Activated CD4-positive, alpha-beta memory T cell treated with anti-CD3 and anti-CD28 coated beads for 36 hours (primary cell): ENCODE measurements at regions of chr3 and their contacts with region 1.

Region 1: DNA sequence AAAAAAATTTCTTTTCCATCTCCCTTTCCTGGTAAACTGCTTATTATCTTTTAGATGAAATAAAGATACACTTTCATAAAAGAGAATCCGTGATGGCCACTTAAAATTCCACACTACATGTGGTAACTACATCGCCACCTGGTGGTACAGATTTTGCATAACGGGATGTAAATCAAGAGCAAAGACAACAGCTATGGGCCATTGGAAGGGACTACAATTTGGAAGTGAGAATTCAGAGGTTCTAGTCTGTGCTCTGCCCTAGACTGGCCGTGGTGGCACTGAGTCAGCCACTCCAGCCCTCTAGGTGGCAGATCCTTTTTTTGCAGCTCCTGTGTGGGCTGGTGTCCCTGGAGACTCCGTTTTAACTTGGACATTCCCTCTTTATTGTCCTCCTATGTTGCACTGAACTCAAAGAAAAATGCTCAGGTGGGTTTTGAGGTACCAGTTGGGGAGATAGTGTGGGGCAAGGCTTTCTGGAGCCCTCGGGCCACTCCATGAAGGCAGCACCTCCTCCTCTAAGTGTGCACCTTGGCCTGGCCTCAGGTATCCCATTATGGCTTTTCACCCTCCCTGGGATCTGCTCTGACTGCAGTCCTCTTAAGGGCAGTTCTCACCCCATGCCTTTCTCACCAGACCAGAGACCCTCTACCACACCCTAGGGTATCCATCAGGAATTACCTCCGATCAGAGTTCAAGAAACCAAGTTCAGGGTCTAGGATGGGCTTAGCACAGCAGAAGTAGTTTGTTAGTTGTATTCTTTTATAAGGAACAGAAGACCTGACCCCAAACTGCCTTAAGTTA is 54.9 kb downstream of the SPSB4 start:
- DNase-seq: peak; percentile 59
- H3K4me3 Mint-ChIP-seq: no peak overlapping the region
- H3K27ac Mint-ChIP-seq: no peak overlapping the region
- H3K4me1 Mint-ChIP-seq: no peaks in the 10 kb centered on the region
- H3K27me3 Mint-ChIP-seq: peaks cover 2% of the 10 kb centered on the region

Region 2: GRCh38 chr3:140898340-140899180 is 207.5 kb before region 1 on chr3:
- CTCF ChIA-PET with region 1: interaction called, 18 read pairs
- POLR2A ChIA-PET with region 1: no interaction called
- intact Hi-C with region 1: loop called (anchors 1 kb)
- DNase-seq: no peak
- H3K4me3 Mint-ChIP-seq: no peak overlapping the region
- H3K27ac Mint-ChIP-seq: no peak overlapping the region
- H3K4me1 Mint-ChIP-seq: no peaks in the 10 kb centered on the region
- H3K27me3 Mint-ChIP-seq: peaks cover 10% of the 10 kb centered on the region

Region 3: GRCh38 chr3:141000027-141000663 is 105.9 kb before region 1 on chr3:
- CTCF ChIA-PET with region 1: interaction called, 45 read pairs
- POLR2A ChIA-PET with region 1: no interaction called
- intact Hi-C with region 1: loop called (anchors 1 kb)
- DNase-seq: peak; percentile 66
- H3K4me3 Mint-ChIP-seq: no peak overlapping the region
- H3K27ac Mint-ChIP-seq: no peak overlapping the region
- H3K4me1 Mint-ChIP-seq: peaks cover 4% of the 10 kb centered on the region
- H3K27me3 Mint-ChIP-seq: no peaks in the 10 kb centered on the region

Region 4: DNA sequence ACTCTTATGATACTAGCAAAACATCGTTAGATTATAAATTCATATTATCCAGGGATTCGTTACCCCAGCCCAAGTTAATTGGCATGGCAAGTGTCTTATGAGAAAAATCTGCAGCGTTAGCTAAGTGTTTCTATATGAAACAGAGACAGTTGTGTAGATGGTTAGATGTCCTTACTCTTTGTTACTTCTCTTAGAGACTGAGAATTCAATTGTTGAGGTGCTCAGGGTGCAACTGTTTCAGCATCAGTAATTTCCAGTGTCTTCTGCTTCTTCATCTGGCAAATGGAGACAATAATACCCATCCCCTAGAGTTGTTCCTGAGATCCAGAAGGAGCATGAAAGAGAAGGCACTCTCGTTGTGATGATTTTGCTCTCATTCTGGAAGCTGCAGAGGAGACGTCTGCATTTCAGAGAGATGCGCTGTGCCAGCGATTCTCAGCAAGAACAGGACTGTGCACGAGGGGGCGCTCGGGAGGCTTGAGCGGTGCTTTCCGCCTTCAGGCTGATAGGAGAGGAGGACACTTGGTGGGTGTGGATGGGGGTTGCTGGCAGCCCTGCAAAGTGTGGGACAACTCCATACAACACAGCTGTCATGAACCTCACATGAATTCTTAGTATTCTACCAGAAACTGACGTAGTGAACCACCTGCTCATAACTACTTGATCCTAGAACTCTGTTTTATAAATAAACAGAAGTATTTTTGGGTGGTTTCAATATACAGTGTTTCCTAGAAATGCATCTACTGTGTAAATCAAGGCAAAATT is 94.6 kb before region 1 on chr3:
- CTCF ChIA-PET with region 1: interaction called, 21 read pairs
- POLR2A ChIA-PET with region 1: no interaction called
- intact Hi-C with region 1: loop called (anchors 1 kb)
- DNase-seq: peak; percentile 87
- H3K4me3 Mint-ChIP-seq: no peak overlapping the region
- H3K27ac Mint-ChIP-seq: no peak overlapping the region
- H3K4me1 Mint-ChIP-seq: peaks cover 3% of the 10 kb centered on the region
- H3K27me3 Mint-ChIP-seq: peaks cover 17% of the 10 kb centered on the region